HepG2 (cell line): ENCODE measurements at regions of chr2 and their contacts with region 1.

Region 1: GRCh38 chr2:32516567-32516966 is 111.3 kb upstream of the TTC27 start:
- DNase-seq: no peak
- ATAC-seq: no peak
- H3K4me3 ChIP-seq: no peak overlapping the region
- H3K27ac ChIP-seq: no peak overlapping the region
- H3K4me1 ChIP-seq: no peaks in the 10 kb centered on the region
- H3K27me3 ChIP-seq: no peaks in the 10 kb centered on the region
- CTCF ChIP-seq: no peak
- EP300 ChIP-seq: no peak
- POLR2A ChIP-seq: no peak
- RAD21 ChIP-seq: no peak

Region 2: GRCh38 chr2:32474381-32474780 is 42.2 kb before region 1 on chr2:
- CTCF ChIA-PET with region 1: no interaction called
- POLR2A ChIA-PET with region 1: no interaction called
- in situ Hi-C with region 1: loop called (anchors 5 kb)
- intact Hi-C with region 1: no loop called
- DNase-seq: no peak
- ATAC-seq: no peak
- H3K4me3 ChIP-seq: no peak overlapping the region
- H3K27ac ChIP-seq: no peak overlapping the region
- H3K4me1 ChIP-seq: no peaks in the 10 kb centered on the region
- H3K27me3 ChIP-seq: no peaks in the 10 kb centered on the region
- CTCF ChIP-seq: no peak
- EP300 ChIP-seq: no peak
- POLR2A ChIP-seq: no peak
- RAD21 ChIP-seq: no peak